Left ventricle myocardium inferior (tissue), 1 donor: ENCODE measurements at regions of chrX and their contacts with region 1.

Region 1: GRCh38 chrX:9341291-9342201 is 123.3 kb upstream of the TBL1X start:
- DNase-seq: peak; percentile 59
- H3K4me3 ChIP-seq: peak overlapping the region; percentile 43
- H3K27ac ChIP-seq: peak overlapping the region; percentile 80
- H3K4me1 ChIP-seq: peaks cover 20% of the 10 kb centered on the region
- H3K27me3 ChIP-seq: no peaks in the 10 kb centered on the region
- CTCF ChIP-seq: no peak

Region 2: DNA sequence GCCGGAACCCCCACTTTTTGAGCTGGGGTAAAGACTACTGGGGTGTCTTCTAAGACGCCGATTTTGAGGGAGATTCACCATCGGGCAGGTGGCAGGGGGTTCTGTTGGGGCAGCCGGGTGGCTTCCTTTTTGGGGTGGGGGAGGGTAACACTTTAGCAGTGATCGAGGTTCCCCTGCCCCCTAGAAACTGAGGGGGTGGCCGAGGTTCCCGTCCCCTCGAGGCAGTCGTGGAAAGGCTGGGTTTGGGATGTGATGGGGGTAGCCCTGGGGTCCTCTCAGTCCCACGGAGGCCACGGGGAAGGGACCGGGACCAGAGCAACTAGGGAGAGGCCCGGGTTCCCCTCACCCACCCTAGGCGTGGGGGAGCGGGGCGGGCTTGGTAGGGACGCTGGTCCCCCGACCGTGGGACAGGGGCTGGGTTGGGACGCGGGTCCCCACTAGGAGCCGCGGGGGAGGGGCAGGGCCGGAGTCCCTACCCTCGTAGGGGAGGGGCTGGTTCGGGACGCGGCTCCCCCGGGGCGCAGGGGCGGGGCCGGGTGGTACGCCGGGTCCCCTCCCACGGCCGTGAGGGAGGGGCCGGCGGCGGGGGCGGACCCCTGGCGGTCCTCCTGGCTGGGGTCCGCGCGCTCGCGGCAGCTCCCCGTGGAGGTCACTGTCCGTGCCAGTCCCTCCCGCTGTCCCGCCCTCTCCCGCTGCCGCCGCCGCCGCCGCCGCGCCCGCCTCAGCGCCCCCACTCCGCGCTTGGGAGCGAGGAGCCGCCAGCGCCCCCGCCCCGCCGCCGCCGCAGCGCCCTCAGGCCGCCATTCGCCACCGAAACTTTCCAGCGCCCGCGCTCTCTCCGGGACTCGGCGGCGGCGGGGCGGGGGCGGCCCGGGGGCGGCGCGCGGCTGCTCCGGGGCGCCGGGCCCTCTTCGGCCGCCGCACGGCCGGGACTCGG is 123.2 kb after region 1 on chrX and contains the start of gene TBL1X:
- intact Hi-C with region 1: loop called (anchors 10 kb)
- DNase-seq: peak; percentile 64
- H3K4me3 ChIP-seq: peak within 1 kb of the TSS; percentile 79
- H3K27ac ChIP-seq: peak within 1 kb of the TSS; percentile 78
- H3K4me1 ChIP-seq: peaks cover 31% of the 10 kb centered on the region
- H3K27me3 ChIP-seq: no peaks in the 10 kb centered on the region
- CTCF ChIP-seq: no peak
- total RNA-seq, gene TBL1X: 9.4 TPM